ENCODE measurements at regions of chr16 and their contacts with region 1.

Region 1: GRCh38 chr16:86519649-86520316 is 9.5 kb downstream of the FOXF1 start:
- DNase-seq: peak; percentile 49

Region 2: DNA sequence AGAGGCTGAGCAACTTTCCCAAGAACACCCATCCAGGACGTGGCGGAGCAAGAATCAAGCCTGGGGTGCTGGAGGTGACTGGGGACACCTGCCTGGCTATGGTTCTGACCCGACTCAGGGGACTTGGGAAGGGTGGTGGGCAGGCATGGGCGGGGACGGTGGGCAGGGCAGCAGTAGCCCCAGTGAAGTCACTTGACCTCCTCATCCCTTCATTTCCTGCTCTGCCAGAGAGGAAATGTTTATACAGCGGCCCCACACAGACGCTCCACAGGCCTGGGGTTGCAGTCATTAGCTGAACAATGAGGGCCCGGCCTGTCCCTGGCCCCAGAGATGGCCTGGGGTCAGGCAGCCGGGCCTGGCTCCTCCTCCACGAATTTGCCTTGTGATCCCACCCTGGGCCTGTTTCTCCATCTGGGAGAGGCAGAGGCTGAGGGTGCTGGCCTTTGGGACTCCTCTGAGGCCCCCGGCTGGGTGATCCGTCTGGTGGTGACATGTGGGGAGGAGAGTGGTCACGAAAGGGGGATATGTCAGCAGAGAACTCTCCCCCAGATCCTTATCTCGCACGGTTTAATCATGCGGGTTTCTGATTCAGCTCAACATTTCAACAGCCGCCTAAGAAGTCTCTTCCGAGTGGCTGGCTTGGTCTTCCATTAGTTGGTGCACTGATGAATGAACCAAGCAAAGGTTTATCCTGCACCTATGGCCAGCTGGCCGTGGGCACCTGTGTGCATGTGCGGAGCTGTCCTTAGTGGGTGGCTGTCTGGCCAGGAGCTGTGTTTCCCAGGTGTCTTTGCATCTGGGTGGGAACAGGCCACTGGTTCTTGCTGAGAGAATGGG is 444.9 kb before region 1 on chr16:
- in situ Hi-C with region 1: loop called (anchors 25 kb)
- DNase-seq: no peak

Measured in Caki2 (cell line).